HCT116 (cell line): ENCODE measurements at regions of chr6 and their contacts with region 1.

Region 1: DNA sequence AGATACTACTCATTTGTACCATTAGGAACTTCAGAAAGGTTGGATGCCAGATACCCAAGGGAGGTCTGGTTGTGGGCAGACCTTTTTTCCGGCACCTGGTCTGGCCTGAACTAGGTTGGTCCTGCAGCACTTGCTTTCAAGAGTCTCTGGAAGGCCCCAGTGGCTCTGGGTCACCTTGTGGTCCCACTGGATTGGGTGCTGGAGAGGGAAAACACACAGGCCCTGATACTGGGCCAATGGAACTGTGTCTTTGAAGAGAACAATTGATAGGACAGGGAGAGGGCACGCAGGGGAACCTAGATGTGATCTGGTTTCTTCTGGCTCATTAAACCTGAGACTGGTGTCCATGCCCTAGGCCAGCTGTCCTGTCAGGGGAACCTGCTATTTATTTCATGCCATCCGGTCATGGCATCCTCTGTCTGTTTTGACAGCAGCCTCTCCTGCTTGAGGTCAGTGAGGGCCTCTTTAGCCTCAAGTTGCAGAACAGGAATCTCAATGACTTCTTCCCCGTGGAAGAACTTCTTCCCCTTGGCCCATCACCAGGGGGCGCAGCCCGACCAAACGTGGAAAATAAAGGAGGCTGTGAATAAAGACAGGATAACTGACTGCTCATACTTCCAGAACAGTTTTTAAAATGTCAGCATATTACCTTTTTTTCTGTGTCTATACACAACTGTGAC is 25.0 kb downstream of the TAF8 start:
- DNase-seq: no peak
- ATAC-seq: peak; percentile 90
- H3K4me3 ChIP-seq: no peak overlapping the region
- H3K27ac ChIP-seq: no peak overlapping the region
- H3K4me1 ChIP-seq: no peaks in the 10 kb centered on the region
- H3K27me3 ChIP-seq: no peaks in the 10 kb centered on the region
- CTCF ChIP-seq: peak; percentile 89 to 97 (median 91)
- POLR2A ChIP-seq: no peak
- RAD21 ChIP-seq: peak; percentile 97

Region 2: DNA sequence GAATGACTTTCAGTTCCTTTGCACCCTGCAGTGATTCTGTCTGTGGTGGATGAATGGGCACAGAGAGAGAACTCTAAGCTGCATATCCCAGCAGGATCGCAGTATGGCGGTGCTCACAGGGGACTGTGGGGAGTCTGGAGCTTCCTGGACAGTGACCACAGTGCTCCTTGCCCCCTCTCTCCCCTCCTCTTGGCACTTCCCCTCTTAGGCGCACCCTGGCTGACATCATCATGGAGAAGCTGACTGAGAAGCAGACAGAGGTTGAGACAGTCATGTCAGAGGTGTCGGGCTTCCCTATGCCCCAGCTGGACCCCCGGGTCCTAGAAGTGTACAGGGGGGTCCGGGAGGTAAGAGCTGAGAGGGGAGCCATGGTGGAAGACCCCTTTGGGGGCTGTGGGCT is 145.4 kb before region 1 on chr6:
- CTCF ChIA-PET with region 1: no interaction called
- POLR2A ChIA-PET with region 1: no interaction called
- RAD21 ChIA-PET with region 1: no interaction called
- intact Hi-C with region 1: no loop called
- DNase-seq: no peak
- ATAC-seq: no peak
- H3K4me3 ChIP-seq: no peak overlapping the region
- H3K27ac ChIP-seq: no peak overlapping the region
- H3K4me1 ChIP-seq: no peaks in the 10 kb centered on the region
- H3K27me3 ChIP-seq: no peaks in the 10 kb centered on the region
- CTCF ChIP-seq: no peak
- POLR2A ChIP-seq: no peak
- RAD21 ChIP-seq: no peak

Region 3: GRCh38 chr6:42166444-42167141 is 91.3 kb after region 1 on chr6:
- CTCF ChIA-PET with region 1: interaction called, 4 read pairs
- POLR2A ChIA-PET with region 1: no interaction called
- RAD21 ChIA-PET with region 1: no interaction called
- intact Hi-C with region 1: loop called (anchors 1 kb)
- DNase-seq: peak; percentile 63
- ATAC-seq: peak; percentile 93
- H3K4me3 ChIP-seq: no peak overlapping the region
- H3K27ac ChIP-seq: peak overlapping the region; percentile 31; the same call in 1 of the 2 replicates
- H3K4me1 ChIP-seq: peaks cover 3 to 13% of the 10 kb centered on the region in 2 experiments; a peak in 3 of 4 replicates
- H3K27me3 ChIP-seq: no peaks in the 10 kb centered on the region
- CTCF ChIP-seq: peak; percentile 90 to 98 (median 98)
- POLR2A ChIP-seq: no peak
- RAD21 ChIP-seq: peak; percentile 94

Region 4: GRCh38 chr6:42217519-42218367 is 142.4 kb after region 1 on chr6 and contains the start of gene MRPS10:
- CTCF ChIA-PET with region 1: interaction called, 8 read pairs
- POLR2A ChIA-PET with region 1: no interaction called
- RAD21 ChIA-PET with region 1: interaction called in 1 of 2 experiments, 3 read pairs
- intact Hi-C with region 1: loop called (anchors 1 kb)
- DNase-seq: peak; percentile 95
- ATAC-seq: peak; percentile 95
- H3K4me3 ChIP-seq: peak within 1 kb of the TSS; percentile 72 to 97
- H3K27ac ChIP-seq: peak within 1 kb of the TSS; percentile 68
- H3K4me1 ChIP-seq: peaks cover 8 to 59% of the 10 kb centered on the region in 2 experiments; a peak in 3 of 4 replicates
- H3K27me3 ChIP-seq: no peaks in the 10 kb centered on the region
- CTCF ChIP-seq: no peak
- POLR2A ChIP-seq: peak; percentile 71
- RAD21 ChIP-seq: peak; percentile 19; the same call in 1 of the 2 replicates
- total RNA-seq, gene MRPS10: 62.1 TPM

Region 5: GRCh38 chr6:42230345-42231321 is 155.3 kb after region 1 on chr6:
- CTCF ChIA-PET with region 1: no interaction called
- POLR2A ChIA-PET with region 1: no interaction called
- RAD21 ChIA-PET with region 1: no interaction called
- intact Hi-C with region 1: loop called (anchors 1 kb)
- DNase-seq: no peak
- ATAC-seq: no peak
- H3K4me3 ChIP-seq: no peak overlapping the region
- H3K27ac ChIP-seq: no peak overlapping the region
- H3K4me1 ChIP-seq: peaks cover 32 to 54% of the 10 kb centered on the region in 2 experiments
- H3K27me3 ChIP-seq: no peaks in the 10 kb centered on the region
- CTCF ChIP-seq: peak; percentile 66 to 78 (median 72); a peak in 5 of 6 replicates
- POLR2A ChIP-seq: no peak
- RAD21 ChIP-seq: peak; percentile 84

Region 6: GRCh38 chr6:42726485-42727086 is 651.3 kb after region 1 on chr6:
- CTCF ChIA-PET with region 1: no interaction called
- POLR2A ChIA-PET with region 1: no interaction called
- RAD21 ChIA-PET with region 1: no interaction called
- intact Hi-C with region 1: loop called (anchors 10 kb)
- DNase-seq: peak; percentile 75
- ATAC-seq: peak; percentile 93
- H3K4me3 ChIP-seq: no peak overlapping the region
- H3K27ac ChIP-seq: no peak overlapping the region
- H3K4me1 ChIP-seq: peaks cover 4 to 9% of the 10 kb centered on the region in 2 experiments; a peak in 3 of 4 replicates
- H3K27me3 ChIP-seq: no peaks in the 10 kb centered on the region
- CTCF ChIP-seq: peak; percentile 87 to 94 (median 90)
- POLR2A ChIP-seq: no peak
- RAD21 ChIP-seq: peak; percentile 98